PC-3 (cell line): ENCODE measurements at regions of chr13 and their contacts with region 1.

Region 1: GRCh38 chr13:97766749-97767148 is 186.7 kb upstream of the IPO5 start:
- DNase-seq: no peak
- ATAC-seq: no peak
- H3K4me3 ChIP-seq: no peak overlapping the region
- H3K27ac ChIP-seq: no peak overlapping the region
- H3K4me1 ChIP-seq: no peaks in the 10 kb centered on the region
- H3K27me3 ChIP-seq: no peaks in the 10 kb centered on the region
- CTCF ChIP-seq: no peak

Region 2: DNA sequence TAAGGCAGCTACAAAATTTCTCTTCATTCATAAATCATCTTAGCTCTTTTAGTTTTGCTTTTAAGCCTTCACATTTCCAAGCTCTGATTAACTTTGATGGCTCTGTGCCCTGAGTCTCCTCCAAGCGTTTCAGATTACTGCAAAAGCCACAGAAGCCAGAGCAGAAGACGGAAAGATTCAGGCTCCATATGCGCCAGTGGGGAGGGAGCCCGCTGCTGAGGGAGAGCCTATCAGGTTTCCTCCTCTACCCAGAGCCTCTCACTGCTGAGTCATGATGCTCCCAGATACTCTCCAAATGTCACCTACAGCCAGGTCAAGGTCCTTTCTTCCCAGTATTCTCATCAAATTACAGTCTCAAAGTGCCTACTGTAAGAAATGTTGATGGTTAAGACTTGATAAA is 139.2 kb before region 1 on chr13:
- CTCF ChIA-PET with region 1: no interaction called
- POLR2A ChIA-PET with region 1: no interaction called
- intact Hi-C with region 1: no loop called
- DNase-seq: peak; percentile 61
- ATAC-seq: peak; percentile 96
- H3K4me3 ChIP-seq: no peak overlapping the region
- H3K27ac ChIP-seq: no peak overlapping the region
- H3K4me1 ChIP-seq: no peaks in the 10 kb centered on the region
- H3K27me3 ChIP-seq: peaks cover 32% of the 10 kb centered on the region
- CTCF ChIP-seq: no peak

Region 3: DNA sequence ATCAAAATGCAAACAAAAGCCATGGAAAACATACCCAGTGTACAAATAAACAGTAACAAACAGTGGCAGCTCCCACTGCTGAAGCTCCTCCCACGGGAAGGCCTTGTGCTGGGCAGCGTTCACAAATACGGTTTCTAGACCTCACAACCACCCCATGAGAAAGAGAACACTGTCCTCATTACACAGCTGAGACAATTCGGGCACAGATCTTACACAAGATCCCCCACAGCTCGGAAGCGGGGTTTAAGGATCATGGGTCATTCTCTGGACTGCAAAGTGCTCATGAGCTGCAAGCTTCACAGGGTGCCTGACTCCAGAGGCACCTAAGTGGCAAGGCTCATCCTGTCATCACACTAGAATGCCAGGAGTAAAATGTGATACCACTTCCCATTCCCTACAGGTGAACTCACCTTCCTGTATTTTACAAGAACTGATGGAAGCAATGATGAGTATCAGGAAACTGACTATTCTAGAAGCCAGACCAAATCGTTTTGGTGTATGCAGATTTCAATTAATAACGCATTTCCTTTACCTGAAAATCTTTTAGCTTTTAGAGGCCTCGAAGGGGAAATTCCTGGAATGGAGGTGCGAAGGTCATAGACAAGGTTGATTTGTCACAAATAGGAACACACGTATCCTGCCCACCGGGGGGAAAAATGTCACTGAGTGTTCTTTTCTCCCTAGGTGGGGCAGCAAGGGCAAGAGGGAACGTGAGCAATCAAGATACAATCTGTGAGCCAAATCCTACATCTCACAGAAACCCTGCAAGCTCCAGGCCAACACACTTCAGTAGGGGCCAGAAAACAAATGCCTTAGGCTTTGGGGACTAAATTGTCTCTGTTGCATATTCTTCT is 769.0 kb after region 1 on chr13:
- CTCF ChIA-PET with region 1: interaction called, 12 read pairs
- POLR2A ChIA-PET with region 1: no interaction called
- intact Hi-C with region 1: no loop called
- DNase-seq: peak; percentile 76
- ATAC-seq: peak; percentile 75
- H3K4me3 ChIP-seq: peak overlapping the region; percentile 32; the same call in 1 of the 2 replicates
- H3K27ac ChIP-seq: peak overlapping the region; percentile 85
- H3K4me1 ChIP-seq: peaks cover 29% of the 10 kb centered on the region
- H3K27me3 ChIP-seq: no peaks in the 10 kb centered on the region
- CTCF ChIP-seq: no peak